SK-N-SH (cell line): ENCODE measurements at regions of chr1 and their contacts with region 1.

Region 1: DNA sequence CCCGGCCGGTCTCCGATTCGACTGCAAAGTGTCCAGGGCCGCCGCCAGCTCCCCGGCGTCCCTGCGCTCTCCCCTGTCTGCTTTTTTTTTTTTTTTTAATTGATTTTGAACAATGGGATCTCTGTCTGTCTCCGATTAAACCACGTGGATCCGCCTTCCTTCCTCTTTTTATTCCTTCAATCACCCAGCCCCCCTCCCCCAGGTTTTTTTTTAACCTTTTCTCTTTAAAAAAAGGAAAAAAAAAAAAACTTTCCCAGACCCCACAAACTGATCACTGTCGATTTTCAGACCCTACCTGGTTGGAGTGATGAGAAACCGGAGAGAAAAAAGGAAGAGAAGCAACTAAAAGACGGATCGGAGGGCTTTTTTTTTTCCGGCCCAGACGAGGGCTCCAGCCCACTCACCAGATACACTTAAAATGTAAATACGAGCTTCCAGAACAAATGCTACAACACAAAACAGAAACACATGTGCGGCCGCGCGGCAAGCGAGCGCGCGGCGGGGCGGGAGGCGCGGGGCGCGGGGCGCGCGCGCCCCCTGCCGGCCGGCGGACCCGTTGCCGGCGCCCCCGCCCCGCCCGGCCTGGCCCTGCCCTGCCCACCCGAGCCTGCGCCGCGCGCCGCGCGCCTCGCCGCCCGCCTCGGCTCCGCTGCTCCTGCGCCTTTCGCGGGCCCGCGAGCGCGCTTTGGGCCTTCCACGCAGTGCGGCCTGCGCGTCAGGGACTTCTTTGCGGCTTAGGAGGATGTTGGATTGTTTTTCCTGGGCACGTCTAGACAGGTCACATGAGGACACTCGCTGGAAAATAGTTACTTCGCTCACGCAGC is at the start of gene RCC2:
- DNase-seq: peak; percentile 96
- H3K4me3 ChIP-seq: peak within 1 kb of the TSS; percentile 86 to 99
- H3K27ac ChIP-seq: peak within 1 kb of the TSS; percentile 97 to 98
- H3K4me1 ChIP-seq: peaks cover 25 to 48% of the 10 kb centered on the region in 2 experiments
- H3K27me3 ChIP-seq: no peaks in the 10 kb centered on the region
- CTCF ChIP-seq: no peak
- EP300 ChIP-seq: peak in 1 of 2 experiments; percentile 10; a peak in 1 of 4 replicates
- RAD21 ChIP-seq: no peak
- polyA plus RNA-seq, gene RCC2: 48.2 and 53.8 TPM in 2 replicates

Region 2: GRCh38 chr1:17451731-17452130 is 12.3 kb after region 1 on chr1:
- CTCF ChIA-PET with region 1: interaction called, 35 read pairs
- POLR2A ChIA-PET with region 1: no interaction called
- DNase-seq: no peak
- H3K4me3 ChIP-seq: no peak overlapping the region
- H3K27ac ChIP-seq: no peak overlapping the region
- H3K4me1 ChIP-seq: no peaks in the 10 kb centered on the region
- H3K27me3 ChIP-seq: no peaks in the 10 kb centered on the region
- CTCF ChIP-seq: no peak
- EP300 ChIP-seq: no peak
- RAD21 ChIP-seq: no peak

Region 3: GRCh38 chr1:17470021-17470799 is 30.7 kb after region 1 on chr1:
- CTCF ChIA-PET with region 1: interaction called, 10 read pairs
- POLR2A ChIA-PET with region 1: interaction called, 4 read pairs
- DNase-seq: no peak
- H3K4me3 ChIP-seq: no peak overlapping the region
- H3K27ac ChIP-seq: no peak overlapping the region
- H3K4me1 ChIP-seq: no peaks in the 10 kb centered on the region
- H3K27me3 ChIP-seq: no peaks in the 10 kb centered on the region
- CTCF ChIP-seq: no peak
- EP300 ChIP-seq: no peak
- RAD21 ChIP-seq: no peak

Region 4: DNA sequence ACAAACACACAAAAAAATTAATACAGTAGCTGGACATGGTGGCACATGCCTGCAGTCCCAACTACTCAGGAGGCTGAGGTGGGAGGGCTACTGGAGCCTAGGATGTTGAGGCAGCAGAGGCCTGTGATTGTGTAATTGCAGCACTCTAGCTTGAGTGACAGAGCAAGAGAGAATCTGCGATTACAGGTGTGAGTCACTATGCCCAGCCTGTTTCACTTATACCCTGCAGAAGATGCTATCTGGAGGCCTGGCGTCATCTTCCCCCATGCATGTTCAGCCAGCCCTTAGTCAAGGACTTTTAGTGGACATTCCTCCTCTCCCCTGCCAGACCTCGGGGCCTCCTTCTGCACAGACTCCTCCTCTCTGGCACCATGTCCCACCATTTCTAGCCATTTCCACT is 36.3 kb after region 1 on chr1:
- CTCF ChIA-PET with region 1: interaction called, 10 read pairs
- POLR2A ChIA-PET with region 1: no interaction called
- DNase-seq: peak; percentile 42
- H3K4me3 ChIP-seq: no peak overlapping the region
- H3K27ac ChIP-seq: peak overlapping the region in 1 of 2 experiments; percentile 48; a peak in 2 of 4 replicates
- H3K4me1 ChIP-seq: no peaks in the 10 kb centered on the region; a peak in 1 of 4 replicates
- H3K27me3 ChIP-seq: no peaks in the 10 kb centered on the region
- CTCF ChIP-seq: no peak
- EP300 ChIP-seq: 0 out of 4 replicates have a peak, but pooled peaks of 1 of the 2 experiments have one; percentile 42
- RAD21 ChIP-seq: no peak